HepG2 (cell line): ENCODE measurements at regions of chr2 and their contacts with region 1.

Region 1: GRCh38 chr2:234135720-234136221 is 85.3 kb downstream of the SPP2 start:
- DNase-seq: peak; percentile 64
- ATAC-seq: peak; percentile 97
- H3K4me3 ChIP-seq: no peak overlapping the region
- H3K27ac ChIP-seq: no peak overlapping the region
- H3K4me1 ChIP-seq: no peaks in the 10 kb centered on the region
- H3K27me3 ChIP-seq: no peaks in the 10 kb centered on the region; a peak in 1 of 5 replicates
- CTCF ChIP-seq: peak; percentile 95
- EP300 ChIP-seq: no peak
- POLR2A ChIP-seq: no peak
- RAD21 ChIP-seq: peak; percentile 83

Region 2: GRCh38 chr2:233976690-233977294 is 159.0 kb before region 1 on chr2:
- CTCF ChIA-PET with region 1: no interaction called
- POLR2A ChIA-PET with region 1: no interaction called
- in situ Hi-C with region 1: no loop called
- intact Hi-C with region 1: loop called (anchors 1 kb)
- DNase-seq: peak; percentile 60
- ATAC-seq: peak; percentile 85
- H3K4me3 ChIP-seq: peak overlapping the region in 1 of 3 experiments; percentile 9; a peak in 2 of 6 replicates
- H3K27ac ChIP-seq: no peak overlapping the region
- H3K4me1 ChIP-seq: peaks cover 40% of the 10 kb centered on the region
- H3K27me3 ChIP-seq: no peaks in the 10 kb centered on the region
- CTCF ChIP-seq: peak; percentile 84
- EP300 ChIP-seq: peak in 1 of 2 experiments; percentile 62; a peak in 1 of 4 replicates
- POLR2A ChIP-seq: no peak
- RAD21 ChIP-seq: peak; percentile 74

Region 3: GRCh38 chr2:234218266-234219180 is 82.8 kb after region 1 on chr2:
- CTCF ChIA-PET with region 1: no interaction called
- POLR2A ChIA-PET with region 1: no interaction called
- in situ Hi-C with region 1: no loop called
- intact Hi-C with region 1: no loop called
- DNase-seq: no peak
- ATAC-seq: no peak
- H3K4me3 ChIP-seq: no peak overlapping the region
- H3K27ac ChIP-seq: no peak overlapping the region
- H3K4me1 ChIP-seq: no peaks in the 10 kb centered on the region
- H3K27me3 ChIP-seq: no peaks in the 10 kb centered on the region
- CTCF ChIP-seq: no peak
- EP300 ChIP-seq: no peak
- POLR2A ChIP-seq: no peak
- RAD21 ChIP-seq: no peak

Region 4: DNA sequence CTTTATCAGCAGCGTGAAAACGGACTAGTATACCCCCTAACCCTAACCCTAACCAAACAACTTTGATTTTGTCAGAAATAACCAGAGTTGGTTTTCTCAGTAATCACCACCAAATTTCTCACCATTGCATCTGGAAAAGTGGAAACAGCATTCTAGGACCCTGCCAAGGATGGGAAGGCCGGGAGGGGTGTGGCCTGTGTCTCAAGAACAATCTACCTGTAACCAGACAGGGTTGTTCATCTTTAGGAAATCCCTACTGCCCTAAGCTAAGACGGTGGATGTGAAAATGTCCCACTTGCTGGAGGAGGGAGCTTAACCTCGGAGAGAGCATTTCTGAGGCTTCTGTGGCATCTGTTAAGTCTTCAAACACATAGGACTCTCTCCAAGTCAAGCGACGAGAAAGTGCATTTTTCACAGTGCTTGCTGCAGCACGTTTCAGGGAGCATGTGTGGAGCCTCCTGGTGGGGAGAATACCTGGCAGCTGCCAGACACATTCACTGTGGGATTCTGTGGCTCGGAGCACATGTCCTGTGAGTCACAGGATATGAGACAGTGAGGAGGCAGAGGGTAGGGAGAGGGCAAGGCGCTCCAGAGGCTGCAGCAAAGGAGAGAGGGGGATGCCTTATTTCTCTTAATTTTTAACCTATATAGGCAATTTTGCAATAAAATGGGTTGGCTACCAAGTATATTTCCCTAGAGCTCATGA is 122.2 kb after region 1 on chr2:
- CTCF ChIA-PET with region 1: interaction called, 7 read pairs
- POLR2A ChIA-PET with region 1: no interaction called
- in situ Hi-C with region 1: no loop called
- intact Hi-C with region 1: loop called (anchors 1 kb)
- DNase-seq: peak; percentile 64
- ATAC-seq: peak; percentile 97
- H3K4me3 ChIP-seq: no peak overlapping the region
- H3K27ac ChIP-seq: no peak overlapping the region
- H3K4me1 ChIP-seq: no peaks in the 10 kb centered on the region
- H3K27me3 ChIP-seq: no peaks in the 10 kb centered on the region
- CTCF ChIP-seq: peak; percentile 70
- EP300 ChIP-seq: no peak
- POLR2A ChIP-seq: no peak
- RAD21 ChIP-seq: peak; percentile 51; the same call in 1 of the 2 replicates

Region 5: GRCh38 chr2:234544659-234545611 is 409.2 kb after region 1 on chr2:
- CTCF ChIA-PET with region 1: interaction called, 10 read pairs
- POLR2A ChIA-PET with region 1: no interaction called
- in situ Hi-C with region 1: no loop called
- intact Hi-C with region 1: loop called (anchors 5 kb)
- DNase-seq: peak; percentile 44
- ATAC-seq: peak; percentile 91
- H3K4me3 ChIP-seq: no peak overlapping the region; a peak in 1 of 6 replicates
- H3K27ac ChIP-seq: no peak overlapping the region
- H3K4me1 ChIP-seq: peaks cover 19% of the 10 kb centered on the region
- H3K27me3 ChIP-seq: peaks cover 4 to 54% of the 10 kb centered on the region in 2 experiments; a peak in 4 of 5 replicates
- CTCF ChIP-seq: peak; percentile 95
- EP300 ChIP-seq: no peak
- POLR2A ChIP-seq: no peak
- RAD21 ChIP-seq: peak; percentile 76